ENCODE measurements at regions of chr7 and their contacts with region 1.

Region 1: DNA sequence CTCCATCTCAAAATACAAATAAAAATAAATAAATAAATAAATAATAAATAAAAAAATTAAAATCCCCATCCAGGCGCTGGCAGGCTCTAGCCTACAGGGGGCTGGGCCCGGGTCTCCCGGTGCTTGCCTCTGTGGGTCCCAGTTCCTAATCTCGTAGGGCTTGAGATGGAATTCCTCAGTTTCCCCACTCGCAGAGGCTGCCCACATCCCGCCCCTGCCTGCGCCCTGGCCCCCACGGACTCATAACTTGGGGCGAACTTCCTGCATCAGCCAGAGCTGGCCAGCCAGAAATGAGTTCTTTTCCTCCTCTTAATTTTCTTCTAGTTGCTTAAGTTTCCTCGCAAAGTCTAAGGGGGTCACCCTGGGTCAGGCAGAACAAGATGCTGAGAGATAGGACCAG is 22.0 kb upstream of the SRRM3 start:
- DNase-seq: no peak
- ATAC-seq: no peak

Region 2: DNA sequence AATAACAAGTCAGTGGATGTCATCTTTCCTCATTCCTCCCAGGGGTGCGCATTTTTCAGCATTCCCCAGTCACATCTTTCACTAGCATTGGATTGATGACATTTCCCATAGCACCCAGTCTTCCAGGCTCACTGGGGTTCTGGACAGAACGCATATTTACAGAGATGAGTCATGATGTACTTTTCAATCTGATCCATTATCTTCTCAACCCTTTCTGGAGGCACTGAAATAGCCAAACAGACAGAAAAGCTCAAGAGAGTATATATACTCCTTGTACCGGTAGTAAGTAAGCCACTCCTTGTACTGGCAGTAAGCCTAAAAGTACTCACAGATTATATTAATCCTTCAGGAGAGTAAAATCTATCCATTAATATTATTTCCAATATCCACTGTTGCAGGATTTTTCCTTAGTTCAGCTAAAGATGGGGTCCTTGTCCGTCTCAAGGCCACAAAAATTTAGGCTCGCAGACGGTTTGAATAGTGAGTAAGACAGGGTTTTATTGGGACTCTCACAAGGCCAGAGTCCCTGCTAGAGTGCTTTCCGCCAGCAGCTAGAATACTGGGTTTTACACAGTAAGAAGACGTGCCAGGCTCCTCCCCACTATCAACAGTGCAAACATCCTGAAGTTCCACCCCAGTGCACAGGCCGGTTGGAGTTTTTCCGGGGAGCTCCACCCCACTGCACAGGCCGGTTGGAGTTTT is 71.0 kb before region 1 on chr7:
- intact Hi-C with region 1: no loop called
- DNase-seq: peak; percentile 70
- ATAC-seq: peak; percentile 96

Region 3: DNA sequence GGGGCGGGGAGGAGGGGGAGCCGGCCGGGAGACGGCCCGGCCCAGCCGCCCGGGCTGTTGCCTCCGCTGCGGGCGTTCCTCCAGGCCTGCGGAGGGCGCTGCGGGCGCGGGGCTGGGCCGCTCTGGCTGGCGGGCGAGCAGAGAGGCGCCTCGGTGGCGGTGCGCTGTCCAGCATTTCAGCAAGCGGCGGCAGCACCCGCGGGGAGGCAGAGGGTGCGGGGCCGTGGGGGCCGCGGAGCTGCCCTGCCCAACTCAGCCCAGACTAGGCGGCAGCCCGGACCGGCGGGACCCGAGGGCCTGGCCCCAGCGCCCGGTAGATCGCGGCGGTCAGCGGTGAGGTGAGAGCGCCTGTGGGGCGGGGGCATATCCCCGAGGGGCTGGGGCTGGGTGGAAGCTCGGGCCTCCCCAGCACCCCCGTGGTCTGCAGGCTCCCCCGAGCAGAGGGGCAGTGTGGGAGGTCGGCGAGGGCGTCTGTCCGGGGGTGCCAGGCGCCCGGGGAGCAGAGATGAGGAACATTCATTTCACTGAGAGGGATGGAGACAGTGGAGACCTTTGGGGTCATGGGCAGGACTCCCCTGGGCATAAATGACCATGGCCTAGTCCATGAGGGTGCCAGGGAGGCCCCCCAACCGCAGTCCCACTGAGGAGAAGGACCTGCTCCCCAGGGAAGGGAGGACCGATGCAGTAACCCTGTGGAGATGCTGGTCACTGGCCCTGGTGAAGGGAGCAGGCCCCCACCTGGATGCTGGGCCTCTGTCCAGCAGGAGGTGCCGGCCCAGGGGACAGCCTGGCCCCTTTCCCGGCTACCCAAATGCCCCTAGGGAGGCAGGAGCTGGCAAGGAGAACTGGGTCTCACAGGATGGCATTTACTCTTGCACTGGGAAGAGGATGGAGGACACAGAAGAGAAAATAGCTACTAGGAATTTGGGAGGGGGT is 22.3 kb after region 1 on chr7 and contains the start of gene SRRM3:
- intact Hi-C with region 1: no loop called
- DNase-seq: peak; percentile 81
- ATAC-seq: peak; percentile 76
- total RNA-seq, gene SRRM3: 2.9 TPM

Region 4: DNA sequence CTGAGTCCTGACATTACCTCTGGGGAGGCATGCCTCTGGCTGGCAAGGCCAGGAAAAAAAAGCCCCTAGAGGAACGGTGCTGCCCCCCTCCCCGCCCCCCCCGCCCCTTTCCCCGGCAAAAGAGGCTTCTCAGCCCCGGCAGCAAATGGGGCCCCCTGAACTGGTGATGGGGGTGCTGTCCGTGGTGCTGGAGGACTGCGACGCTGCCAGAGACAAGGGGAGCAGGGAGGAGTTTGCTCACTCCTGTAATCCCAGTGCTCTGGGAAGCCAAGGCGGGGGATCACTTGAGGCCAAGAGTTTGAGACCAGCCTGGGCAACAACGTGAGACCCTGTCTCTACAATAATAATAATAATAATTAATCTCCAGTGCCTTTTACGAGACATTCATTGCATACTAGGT is 45.7 kb after region 1 on chr7:
- intact Hi-C with region 1: no loop called
- DNase-seq: no peak
- ATAC-seq: no peak

Region 5: GRCh38 chr7:76285604-76286374 is 106.1 kb after region 1 on chr7:
- intact Hi-C with region 1: loop called (anchors 5 kb)
- DNase-seq: no peak
- ATAC-seq: no peak